ENCODE measurements at regions of chrX and their contacts with region 1.

Region 1: GRCh38 chrX:17860811-17861488 is at the start of gene RAI2:
- DNase-seq: peak; percentile 53 to 84
- ATAC-seq: peak; percentile 17
- H3K4me3 ChIP-seq: peak within 1 kb of the TSS; percentile 1 to 62
- H3K27ac ChIP-seq: no peak within 1 kb of the TSS
- H3K4me1 ChIP-seq: no peaks in the 10 kb centered on the region
- H3K27me3 ChIP-seq: no peaks in the 10 kb centered on the region
- total RNA-seq, gene RAI2: 24.9 to 32.2 TPM

Region 2: GRCh38 chrX:17817251-17817650 is 43.7 kb before region 1 on chrX:
- intact Hi-C with region 1: loop called in 1 of 2 experiments (anchors 5 kb)
- DNase-seq: no peak
- ATAC-seq: peak; percentile 65
- H3K4me3 ChIP-seq: no peak overlapping the region
- H3K27ac ChIP-seq: peak overlapping the region in 1 of 2 donors; percentile 21
- H3K4me1 ChIP-seq: peaks cover 0 to 10% of the 10 kb centered on the region in 2 donors
- H3K27me3 ChIP-seq: no peaks in the 10 kb centered on the region